ENCODE measurements at regions of chr11 and their contacts with region 1.

Region 1: DNA sequence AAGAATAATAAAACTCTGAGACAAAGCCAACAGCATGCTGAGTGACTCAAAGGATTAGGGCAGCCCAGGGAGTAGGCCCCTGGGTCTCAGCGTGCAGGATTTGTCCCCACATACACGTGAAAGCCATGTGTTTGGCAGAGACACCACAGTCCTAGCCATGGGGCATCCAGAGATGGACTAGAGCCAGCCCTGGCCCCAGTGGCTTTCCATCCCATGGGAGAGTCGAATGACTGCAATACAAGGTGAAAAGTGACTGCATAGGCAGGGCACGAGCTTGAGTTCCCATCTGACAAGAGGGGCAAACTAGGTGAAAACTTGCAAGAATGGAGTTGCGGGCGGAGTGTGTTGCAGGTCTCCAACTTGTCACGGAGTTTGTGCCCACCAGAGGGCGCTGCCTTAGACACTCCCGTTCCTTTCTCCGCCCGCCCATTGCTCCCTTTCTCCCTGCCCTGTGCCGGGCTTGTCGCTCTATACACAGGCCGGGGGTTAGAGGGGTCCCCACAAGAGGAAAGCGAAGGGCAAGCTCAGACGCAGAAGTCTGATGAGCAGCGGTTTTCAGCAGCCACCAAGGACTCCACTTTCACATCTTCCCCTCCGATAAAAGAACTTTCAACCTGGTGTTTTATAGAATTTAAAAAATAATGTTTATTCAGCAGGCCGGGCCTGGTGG is 24.2 kb downstream of the TSKU start:
- DNase-seq: peak; percentile 90
- ATAC-seq: peak; percentile 85
- H3K4me3 ChIP-seq: no peak overlapping the region
- H3K27ac ChIP-seq: no peak overlapping the region
- H3K4me1 ChIP-seq: peaks cover 21% of the 10 kb centered on the region
- H3K27me3 ChIP-seq: no peaks in the 10 kb centered on the region
- CTCF ChIP-seq: peak; percentile 77

Region 2: DNA sequence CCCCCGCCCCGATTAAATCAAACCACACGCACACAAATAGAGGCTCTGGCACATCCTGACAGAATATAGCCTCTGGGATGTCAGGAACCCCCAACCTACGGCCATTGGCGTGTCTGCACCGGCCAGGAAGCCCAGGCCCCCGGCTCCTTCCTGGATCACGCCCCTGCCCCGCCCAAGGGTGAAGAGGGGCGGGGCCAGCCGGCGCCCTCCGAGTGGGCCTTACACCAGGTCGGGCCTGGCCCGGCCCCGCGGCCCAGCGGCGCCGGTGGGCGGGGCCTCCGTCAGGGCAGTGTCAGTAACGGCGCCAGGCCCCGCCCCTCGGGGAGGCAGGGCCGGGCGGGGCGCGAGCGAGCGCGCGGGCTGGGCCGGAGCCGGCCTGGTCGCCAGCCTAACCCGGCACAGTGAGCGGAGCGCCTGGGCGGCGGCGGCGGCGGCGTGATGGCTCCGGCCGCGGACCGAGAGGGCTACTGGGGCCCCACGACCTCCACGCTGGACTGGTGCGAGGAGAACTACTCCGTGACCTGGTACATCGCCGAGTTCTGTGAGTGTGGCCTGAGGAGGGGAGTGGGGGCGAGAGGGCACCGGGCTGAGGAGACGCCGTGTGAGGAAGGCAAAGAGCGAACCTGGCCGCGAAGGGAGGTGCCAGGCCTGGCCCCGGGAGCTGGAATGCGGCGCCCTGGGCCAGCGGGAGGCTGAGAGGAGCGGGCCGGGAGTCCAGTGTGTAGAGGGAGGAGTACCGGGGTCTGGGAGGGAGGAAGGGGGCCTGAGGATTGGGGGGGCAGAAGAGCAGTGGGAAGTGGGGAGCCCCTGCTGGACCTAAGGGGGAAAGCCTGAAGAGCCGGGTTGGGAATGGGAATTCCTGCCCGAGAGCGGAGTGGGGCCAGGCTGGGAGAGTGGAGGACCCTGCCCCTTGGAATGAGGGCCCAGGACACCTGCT is 53.5 kb after region 1 on chr11 and contains the start of gene ACER3:
- intact Hi-C with region 1: loop called (anchors 10 kb)
- DNase-seq: peak; percentile 97
- ATAC-seq: peak; percentile 99
- H3K4me3 ChIP-seq: peak within 1 kb of the TSS; percentile 82
- H3K27ac ChIP-seq: peak within 1 kb of the TSS; percentile 94
- H3K4me1 ChIP-seq: peaks cover 34% of the 10 kb centered on the region
- H3K27me3 ChIP-seq: no peaks in the 10 kb centered on the region
- CTCF ChIP-seq: peak; percentile 26
- total RNA-seq, gene ACER3: 42.2 TPM

Region 3: DNA sequence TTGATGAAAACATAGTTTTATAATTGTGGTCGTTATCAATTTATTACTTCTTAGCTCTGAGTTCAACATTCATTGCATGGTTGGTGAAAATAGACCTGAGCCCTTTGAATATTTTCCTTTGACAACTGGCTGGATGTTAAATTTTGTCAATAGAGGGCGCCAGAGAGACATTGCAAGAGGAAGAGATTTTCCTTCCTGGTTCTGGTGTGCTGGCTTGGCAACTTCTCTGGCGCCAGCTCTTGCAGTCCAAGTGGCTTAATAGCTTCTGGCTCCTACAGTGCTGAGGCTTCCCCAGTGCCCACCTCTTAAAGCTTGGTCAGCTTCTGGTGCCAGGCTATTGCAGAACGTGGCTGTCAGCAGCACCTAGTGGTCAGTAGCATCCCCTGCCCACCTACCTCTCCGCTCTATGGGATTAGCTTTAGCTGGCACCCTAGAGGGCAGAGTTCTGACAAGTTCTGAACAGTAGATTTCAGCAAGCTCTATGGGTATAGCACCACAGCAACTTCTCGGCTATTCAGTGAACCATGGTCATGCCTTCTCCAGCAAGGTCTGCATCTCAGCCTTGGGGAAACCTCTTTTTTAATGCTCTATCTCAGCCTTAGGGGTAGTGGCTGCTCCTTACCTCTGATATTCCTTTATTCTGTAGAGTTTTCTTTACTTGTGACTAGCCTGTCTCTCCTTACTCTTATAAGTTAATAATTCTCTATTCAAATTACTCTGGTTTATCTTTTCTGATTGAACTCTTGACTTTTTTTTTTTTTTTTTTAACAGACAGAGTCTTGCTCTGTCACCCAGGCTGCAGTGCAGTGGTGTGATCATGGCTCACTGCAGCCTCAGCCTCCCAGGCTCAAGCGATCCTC is 112.8 kb after region 1 on chr11:
- intact Hi-C with region 1: loop called (anchors 10 kb)
- DNase-seq: peak; percentile 75
- ATAC-seq: peak; percentile 97
- H3K4me3 ChIP-seq: no peak overlapping the region
- H3K27ac ChIP-seq: no peak overlapping the region
- H3K4me1 ChIP-seq: peaks cover 5% of the 10 kb centered on the region
- H3K27me3 ChIP-seq: no peaks in the 10 kb centered on the region
- CTCF ChIP-seq: peak; percentile 89

Region 4: DNA sequence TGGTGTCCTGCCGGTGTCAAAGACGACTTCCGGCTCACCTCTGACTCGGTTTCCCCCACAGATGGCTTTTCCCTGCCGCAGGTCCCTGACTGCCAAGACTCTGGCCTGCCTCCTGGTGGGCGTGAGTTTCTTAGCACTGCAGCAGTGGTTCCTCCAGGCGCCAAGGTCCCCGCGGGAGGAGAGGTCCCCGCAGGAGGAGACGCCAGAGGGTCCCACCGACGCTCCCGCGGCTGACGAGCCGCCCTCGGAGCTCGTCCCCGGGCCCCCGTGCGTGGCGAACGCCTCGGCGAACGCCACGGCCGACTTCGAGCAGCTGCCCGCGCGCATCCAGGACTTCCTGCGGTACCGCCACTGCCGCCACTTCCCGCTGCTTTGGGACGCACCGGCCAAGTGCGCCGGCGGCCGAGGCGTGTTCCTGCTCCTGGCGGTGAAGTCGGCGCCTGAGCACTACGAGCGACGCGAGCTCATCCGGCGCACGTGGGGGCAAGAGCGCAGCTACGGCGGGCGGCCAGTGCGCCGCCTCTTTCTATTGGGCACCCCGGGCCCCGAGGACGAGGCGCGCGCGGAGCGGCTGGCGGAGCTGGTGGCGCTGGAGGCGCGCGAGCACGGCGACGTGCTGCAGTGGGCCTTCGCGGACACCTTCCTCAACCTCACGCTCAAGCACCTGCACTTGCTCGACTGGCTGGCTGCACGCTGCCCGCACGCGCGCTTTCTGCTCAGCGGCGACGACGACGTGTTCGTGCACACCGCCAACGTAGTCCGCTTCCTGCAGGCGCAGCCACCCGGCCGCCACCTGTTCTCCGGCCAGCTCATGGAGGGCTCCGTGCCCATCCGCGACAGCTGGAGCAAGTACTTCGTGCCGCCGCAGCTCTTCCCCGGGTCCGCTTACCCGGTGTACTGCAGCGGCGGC is 232.4 kb after region 1 on chr11:
- intact Hi-C with region 1: loop called (anchors 10 kb)
- DNase-seq: peak; percentile 70
- ATAC-seq: peak; percentile 43
- H3K4me3 ChIP-seq: peak overlapping the region; percentile 37
- H3K27ac ChIP-seq: no peak overlapping the region
- H3K4me1 ChIP-seq: peaks cover 9% of the 10 kb centered on the region
- H3K27me3 ChIP-seq: peaks cover 31% of the 10 kb centered on the region
- CTCF ChIP-seq: peak; percentile 44

Measured in upper lobe of right lung (tissue), 1 donor.